ENCODE measurements at regions of chr22 and their contacts with region 1.

Region 1: GRCh38 chr22:42820066-42820763 is 36.9 kb downstream of the ARFGAP3 start:
- DNase-seq: no peak
- ATAC-seq: no peak
- H3K4me3 Mint-ChIP-seq: no peak overlapping the region
- H3K27ac Mint-ChIP-seq: no peak overlapping the region
- H3K4me1 Mint-ChIP-seq: no peaks in the 10 kb centered on the region
- H3K27me3 Mint-ChIP-seq: no peaks in the 10 kb centered on the region
- CTCF ChIP-seq: peak; percentile 58

Region 2: GRCh38 chr22:42621505-42622002 is 198.7 kb before region 1 on chr22:
- CTCF ChIA-PET with region 1: interaction called, 13 read pairs
- POLR2A ChIA-PET with region 1: no interaction called
- DNase-seq: peak; percentile 91
- ATAC-seq: peak; percentile 95
- H3K4me3 Mint-ChIP-seq: no peak overlapping the region
- H3K27ac Mint-ChIP-seq: no peak overlapping the region
- H3K4me1 Mint-ChIP-seq: peaks cover 7% of the 10 kb centered on the region
- H3K27me3 Mint-ChIP-seq: no peaks in the 10 kb centered on the region
- CTCF ChIP-seq: peak; percentile 80

Region 3: GRCh38 chr22:42805016-42805997 is 14.9 kb before region 1 on chr22:
- CTCF ChIA-PET with region 1: interaction called, 13 read pairs
- POLR2A ChIA-PET with region 1: no interaction called
- DNase-seq: no peak
- ATAC-seq: peak; percentile 59
- H3K4me3 Mint-ChIP-seq: no peak overlapping the region
- H3K27ac Mint-ChIP-seq: peak overlapping the region; percentile 75
- H3K4me1 Mint-ChIP-seq: peaks cover 20% of the 10 kb centered on the region
- H3K27me3 Mint-ChIP-seq: no peaks in the 10 kb centered on the region
- CTCF ChIP-seq: no peak